ENCODE measurements at regions of chr7 and their contacts with region 1.

Region 1: DNA sequence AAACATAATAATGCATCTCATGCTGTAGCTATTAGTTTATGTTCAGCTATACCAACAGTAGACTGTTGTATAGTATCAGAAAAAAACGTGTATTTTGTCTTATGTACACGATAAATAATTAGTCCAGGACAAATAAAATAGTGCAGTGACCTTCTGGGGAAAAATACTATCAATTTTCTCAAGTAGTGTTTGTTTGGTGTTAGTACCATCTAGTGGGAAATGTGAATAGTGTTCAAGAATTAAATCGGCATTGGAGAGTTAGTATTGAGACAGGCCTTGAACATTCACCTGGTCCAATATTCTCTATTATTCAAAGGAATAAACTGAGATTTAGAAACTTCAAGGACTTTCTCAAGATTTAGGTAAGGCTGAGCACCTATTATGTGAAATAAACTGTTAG is 21.7 kb upstream of the OR2A5 start:
- DNase-seq: peak; percentile 39
- H3K4me3 Mint-ChIP-seq: no peak overlapping the region
- H3K27ac Mint-ChIP-seq: no peak overlapping the region
- H3K4me1 Mint-ChIP-seq: no peaks in the 10 kb centered on the region
- H3K27me3 Mint-ChIP-seq: peaks cover 20% of the 10 kb centered on the region
- CTCF ChIP-seq: peak; percentile 54

Region 2: DNA sequence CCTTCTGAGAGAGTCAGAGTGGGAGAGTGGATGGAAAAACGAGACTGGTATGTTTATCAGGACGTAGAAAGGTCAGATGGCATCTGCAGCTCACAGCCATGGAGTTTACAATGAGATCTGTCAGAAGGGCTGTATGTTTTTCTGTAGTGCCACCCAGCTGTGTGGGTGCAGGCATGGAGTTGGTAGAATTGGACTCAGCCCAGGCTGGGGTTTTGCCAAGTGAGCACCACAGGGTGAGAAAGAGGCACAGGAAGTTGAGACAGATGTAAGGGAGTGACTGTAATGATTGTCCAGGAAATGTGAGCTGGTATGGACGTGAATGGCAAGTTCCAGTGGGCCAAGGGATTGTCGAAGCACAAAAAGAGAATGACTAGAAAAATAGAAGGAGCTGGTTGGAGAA is 655.0 kb before region 1 on chr7:
- CTCF ChIA-PET with region 1: no interaction called
- POLR2A ChIA-PET with region 1: no interaction called
- intact Hi-C with region 1: no loop called
- DNase-seq: peak; percentile 96
- H3K4me3 Mint-ChIP-seq: no peak overlapping the region
- H3K27ac Mint-ChIP-seq: peak overlapping the region; percentile 13
- H3K4me1 Mint-ChIP-seq: peaks cover 37% of the 10 kb centered on the region
- H3K27me3 Mint-ChIP-seq: no peaks in the 10 kb centered on the region
- CTCF ChIP-seq: peak; percentile 15

Region 3: DNA sequence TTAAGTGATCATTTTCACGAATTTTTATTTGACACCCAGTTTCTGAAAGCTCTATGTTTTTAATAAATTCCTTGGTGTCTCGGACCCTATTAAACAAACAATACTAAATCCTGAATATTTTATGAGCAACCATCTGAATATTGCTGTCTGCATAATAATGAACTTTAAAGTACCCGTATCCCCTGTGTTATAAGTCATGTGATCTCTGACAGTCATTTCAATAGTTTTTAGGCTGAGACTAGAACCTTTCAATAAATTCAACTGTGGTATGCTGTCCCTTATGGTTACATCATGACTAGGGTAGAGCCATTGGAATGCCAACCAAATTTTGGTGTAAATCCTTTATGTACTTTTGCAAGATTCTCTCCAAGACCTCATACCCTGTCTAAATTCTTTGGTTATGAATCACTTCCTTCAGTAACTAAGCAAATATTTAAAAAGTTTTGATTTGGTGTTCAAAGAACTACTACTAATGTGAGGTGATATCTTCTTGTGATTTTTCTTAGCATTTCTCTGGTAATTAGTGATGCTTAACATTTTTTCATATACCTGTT is 47.8 kb before region 1 on chr7:
- CTCF ChIA-PET with region 1: no interaction called
- POLR2A ChIA-PET with region 1: no interaction called
- intact Hi-C with region 1: loop called (anchors 10 kb)
- DNase-seq: peak; percentile 51
- H3K4me3 Mint-ChIP-seq: no peak overlapping the region
- H3K27ac Mint-ChIP-seq: peak overlapping the region; percentile 33
- H3K4me1 Mint-ChIP-seq: peaks cover 21% of the 10 kb centered on the region
- H3K27me3 Mint-ChIP-seq: no peaks in the 10 kb centered on the region
- CTCF ChIP-seq: no peak

Region 4: DNA sequence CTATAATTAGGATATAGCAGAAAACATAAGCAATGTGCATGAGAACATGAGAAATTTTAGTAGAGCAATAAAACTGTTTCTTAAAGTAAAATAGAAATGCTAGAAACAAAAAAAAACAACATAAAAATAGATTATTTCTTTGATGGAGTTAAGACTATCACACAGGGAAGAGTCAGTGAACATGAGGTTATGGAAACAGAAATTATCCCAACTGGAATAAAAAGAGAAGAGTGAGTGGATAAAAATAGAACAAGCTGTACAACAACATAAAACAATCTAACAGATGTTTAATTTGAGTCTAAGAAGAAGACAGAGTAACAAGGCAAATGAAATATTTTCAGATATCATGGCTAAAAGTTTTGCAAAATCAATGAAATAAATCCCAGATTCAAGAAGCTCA is 34.4 kb before region 1 on chr7:
- CTCF ChIA-PET with region 1: no interaction called
- POLR2A ChIA-PET with region 1: no interaction called
- intact Hi-C with region 1: no loop called
- DNase-seq: no peak
- H3K4me3 Mint-ChIP-seq: no peak overlapping the region
- H3K27ac Mint-ChIP-seq: no peak overlapping the region
- H3K4me1 Mint-ChIP-seq: no peaks in the 10 kb centered on the region
- H3K27me3 Mint-ChIP-seq: no peaks in the 10 kb centered on the region
- CTCF ChIP-seq: no peak

Region 5: GRCh38 chr7:144127703-144128334 is 100.7 kb after region 1 on chr7:
- CTCF ChIA-PET with region 1: interaction called, 3 read pairs
- POLR2A ChIA-PET with region 1: interaction called, 3 read pairs
- intact Hi-C with region 1: loop called (anchors 5 kb)
- DNase-seq: peak; percentile 86
- H3K4me3 Mint-ChIP-seq: no peak overlapping the region
- H3K27ac Mint-ChIP-seq: no peak overlapping the region
- H3K4me1 Mint-ChIP-seq: no peaks in the 10 kb centered on the region
- H3K27me3 Mint-ChIP-seq: no peaks in the 10 kb centered on the region
- CTCF ChIP-seq: peak; percentile 76

Region 6: DNA sequence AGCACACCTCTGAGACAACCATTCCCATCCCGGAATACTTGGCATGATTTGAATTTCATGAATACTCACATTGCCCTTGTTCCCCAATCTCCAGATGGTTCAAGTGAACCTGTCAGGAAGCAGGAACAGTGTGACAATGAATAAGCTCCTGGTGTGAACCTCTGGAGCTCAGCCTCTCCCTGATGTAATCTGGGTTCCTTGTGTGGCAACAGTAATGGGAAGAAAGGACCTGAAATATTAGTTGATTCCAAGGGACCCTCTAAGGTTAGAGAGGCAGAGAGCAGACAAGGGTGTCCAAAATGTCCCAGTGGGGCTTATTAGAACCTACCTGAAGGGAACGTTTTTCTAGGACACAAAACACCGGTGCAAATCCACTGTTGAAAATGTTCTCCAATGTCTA is 229.0 kb after region 1 on chr7:
- CTCF ChIA-PET with region 1: no interaction called
- POLR2A ChIA-PET with region 1: no interaction called
- intact Hi-C with region 1: no loop called
- DNase-seq: peak; percentile 79
- H3K4me3 Mint-ChIP-seq: no peak overlapping the region
- H3K27ac Mint-ChIP-seq: peak overlapping the region; percentile 35
- H3K4me1 Mint-ChIP-seq: no peaks in the 10 kb centered on the region
- H3K27me3 Mint-ChIP-seq: no peaks in the 10 kb centered on the region
- CTCF ChIP-seq: no peak